ENCODE measurements at regions of chr12 and their contacts with region 1.

Region 1: DNA sequence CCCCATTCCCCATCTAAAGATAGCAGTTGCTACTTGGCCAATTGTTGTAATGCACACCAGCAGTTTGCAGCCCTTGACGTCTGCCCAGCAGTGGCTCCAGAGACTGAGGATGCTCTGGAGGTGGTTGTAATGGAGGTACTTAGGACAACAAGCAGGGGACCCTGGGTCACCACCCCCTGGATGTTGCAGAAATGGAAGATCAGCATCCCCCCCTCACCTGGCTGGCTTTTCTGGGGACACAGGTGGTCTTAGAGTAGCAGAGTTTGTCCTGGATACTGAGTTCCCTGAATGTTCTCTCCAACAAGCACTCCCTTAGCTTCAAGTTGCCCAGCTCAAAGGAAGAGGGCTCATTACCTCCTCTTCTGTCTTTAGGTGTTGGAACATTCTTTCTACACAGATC is 250.5 kb downstream of the AACS start:
- DNase-seq: no peak
- H3K4me3 ChIP-seq: no peak overlapping the region
- H3K27ac ChIP-seq: no peak overlapping the region
- H3K4me1 ChIP-seq: no peaks in the 10 kb centered on the region
- H3K27me3 ChIP-seq: peaks cover 50% of the 10 kb centered on the region
- CTCF ChIP-seq: no peak

Region 2: DNA sequence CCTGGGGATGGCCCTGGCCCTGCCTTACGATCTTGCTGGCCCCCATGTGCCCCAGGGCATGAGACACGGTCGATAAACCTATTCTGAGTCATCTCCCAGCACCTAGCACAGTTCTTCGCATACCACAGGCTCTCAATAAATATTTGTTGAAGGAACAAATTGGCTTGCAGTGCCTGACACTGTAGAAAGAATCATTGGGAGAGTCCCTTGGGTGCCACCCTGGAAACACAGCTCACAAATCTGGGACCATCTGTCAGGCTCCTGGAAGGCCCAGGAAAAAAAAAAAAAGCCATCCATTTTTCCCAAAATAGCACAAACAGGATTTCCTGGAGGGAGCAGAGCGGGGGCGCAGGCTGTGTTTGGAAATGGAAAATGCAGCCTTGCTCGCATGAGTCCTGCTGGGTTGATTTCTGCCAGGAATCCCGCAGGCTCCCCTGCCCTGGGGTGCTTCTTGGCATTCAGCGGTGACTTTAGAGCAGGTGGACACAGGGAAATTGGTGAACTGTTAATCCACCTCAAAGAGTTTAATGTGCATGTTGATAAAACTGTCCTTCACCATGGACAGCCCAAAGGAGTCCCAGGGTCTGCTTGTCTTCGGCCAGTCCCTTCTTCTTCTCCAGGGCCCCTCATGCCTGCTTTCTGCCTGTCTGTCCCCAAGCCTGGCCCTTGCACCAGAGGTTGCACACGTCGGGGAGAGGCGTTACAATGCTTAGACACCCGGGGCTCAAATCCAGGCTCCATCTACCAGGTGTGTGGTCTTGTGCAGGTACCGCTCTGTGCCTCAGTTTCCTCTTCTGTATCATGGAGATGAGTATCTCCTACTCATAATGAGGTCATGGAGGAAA is 1127.0 kb before region 1 on chr12:
- CTCF ChIA-PET with region 1: no interaction called
- POLR2A ChIA-PET with region 1: no interaction called
- intact Hi-C with region 1: no loop called
- DNase-seq: peak in 1 of 2 experiments; percentile 74
- H3K4me3 ChIP-seq: no peak overlapping the region
- H3K27ac ChIP-seq: no peak overlapping the region
- H3K4me1 ChIP-seq: peaks cover 16% of the 10 kb centered on the region
- H3K27me3 ChIP-seq: peaks cover 38% of the 10 kb centered on the region; the same call in 1 of the 2 replicates
- CTCF ChIP-seq: no peak

Region 3: DNA sequence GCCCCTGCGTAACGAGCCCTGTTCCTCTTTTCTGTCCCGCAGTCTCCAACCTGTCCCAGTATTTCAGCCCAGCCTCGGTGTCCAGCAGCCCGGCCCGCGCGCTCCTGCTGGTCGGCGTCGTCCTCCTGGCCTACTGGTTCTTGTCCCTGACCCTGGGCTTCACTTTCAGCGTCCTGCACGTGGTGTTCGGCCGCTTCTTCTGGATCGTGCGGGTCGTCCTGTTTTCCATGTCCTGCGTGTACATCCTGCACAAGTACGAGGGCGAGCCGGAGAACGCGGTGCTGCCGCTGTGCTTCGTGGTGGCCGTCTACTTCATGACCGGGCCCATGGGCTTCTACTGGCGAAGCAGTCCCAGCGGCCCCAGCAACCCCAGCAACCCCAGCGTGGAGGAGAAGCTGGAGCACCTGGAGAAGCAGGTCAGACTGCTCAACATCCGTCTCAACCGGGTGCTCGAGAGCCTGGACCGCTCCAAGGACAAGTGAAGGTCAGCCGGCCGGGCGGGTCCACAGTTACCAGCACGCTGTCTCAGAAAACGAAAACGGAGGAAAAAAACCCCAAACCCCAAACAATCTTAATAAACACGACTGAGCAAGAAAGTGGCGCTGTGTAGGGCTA is 290.7 kb before region 1 on chr12:
- CTCF ChIA-PET with region 1: no interaction called
- POLR2A ChIA-PET with region 1: no interaction called
- intact Hi-C with region 1: no loop called
- DNase-seq: no peak
- H3K4me3 ChIP-seq: no peak overlapping the region
- H3K27ac ChIP-seq: no peak overlapping the region
- H3K4me1 ChIP-seq: no peaks in the 10 kb centered on the region
- H3K27me3 ChIP-seq: no peaks in the 10 kb centered on the region
- CTCF ChIP-seq: no peak

Region 4: GRCh38 chr12:125329239-125330219 is 13.8 kb after region 1 on chr12:
- CTCF ChIA-PET with region 1: interaction called, 13 read pairs
- POLR2A ChIA-PET with region 1: no interaction called
- intact Hi-C with region 1: no loop called
- DNase-seq: no peak
- H3K4me3 ChIP-seq: no peak overlapping the region
- H3K27ac ChIP-seq: no peak overlapping the region
- H3K4me1 ChIP-seq: no peaks in the 10 kb centered on the region
- H3K27me3 ChIP-seq: peaks cover 66% of the 10 kb centered on the region
- CTCF ChIP-seq: no peak

Region 5: DNA sequence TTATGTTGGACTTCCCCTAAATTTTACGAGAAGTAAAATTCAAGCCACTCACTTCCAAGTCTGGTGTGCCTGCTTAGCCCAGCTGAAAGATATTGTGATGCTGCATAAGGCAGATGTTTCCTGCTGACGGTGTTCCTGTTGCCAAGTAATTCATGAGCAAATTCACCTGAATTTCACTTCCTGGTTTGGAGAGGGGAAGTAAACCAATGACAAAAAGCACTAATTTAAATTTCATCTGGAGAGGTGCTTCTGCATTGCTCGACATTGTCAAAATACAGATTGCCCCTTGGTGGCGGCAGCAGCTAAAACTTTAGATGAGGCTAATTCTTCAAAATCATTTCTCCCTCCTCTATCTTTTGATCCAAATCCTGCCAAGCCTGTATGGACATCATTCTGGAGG is 30.6 kb after region 1 on chr12:
- CTCF ChIA-PET with region 1: no interaction called
- POLR2A ChIA-PET with region 1: no interaction called
- intact Hi-C with region 1: no loop called
- DNase-seq: no peak
- H3K4me3 ChIP-seq: no peak overlapping the region
- H3K27ac ChIP-seq: no peak overlapping the region
- H3K4me1 ChIP-seq: no peaks in the 10 kb centered on the region
- H3K27me3 ChIP-seq: peaks cover 69% of the 10 kb centered on the region
- CTCF ChIP-seq: 0 out of 2 replicates have a peak, but pooled peaks have one; percentile 13

Measured in PC-9 (cell line).